ENCODE measurements at regions of chrX and their contacts with region 1.

Region 1: GRCh38 chrX:13401724-13402123 is 81.9 kb upstream of the ATXN3L start:
- DNase-seq: no peak
- ATAC-seq: no peak
- H3K4me3 ChIP-seq: no peak overlapping the region
- H3K4me3 Mint-ChIP-seq: no peak overlapping the region
- H3K27ac ChIP-seq: no peak overlapping the region
- H3K27ac Mint-ChIP-seq: no peak overlapping the region
- H3K4me1 ChIP-seq: no peaks in the 10 kb centered on the region
- H3K4me1 Mint-ChIP-seq: no peaks in the 10 kb centered on the region
- H3K27me3 ChIP-seq: no peaks in the 10 kb centered on the region
- H3K27me3 Mint-ChIP-seq: no peaks in the 10 kb centered on the region
- CTCF ChIP-seq: no peak

Region 2: DNA sequence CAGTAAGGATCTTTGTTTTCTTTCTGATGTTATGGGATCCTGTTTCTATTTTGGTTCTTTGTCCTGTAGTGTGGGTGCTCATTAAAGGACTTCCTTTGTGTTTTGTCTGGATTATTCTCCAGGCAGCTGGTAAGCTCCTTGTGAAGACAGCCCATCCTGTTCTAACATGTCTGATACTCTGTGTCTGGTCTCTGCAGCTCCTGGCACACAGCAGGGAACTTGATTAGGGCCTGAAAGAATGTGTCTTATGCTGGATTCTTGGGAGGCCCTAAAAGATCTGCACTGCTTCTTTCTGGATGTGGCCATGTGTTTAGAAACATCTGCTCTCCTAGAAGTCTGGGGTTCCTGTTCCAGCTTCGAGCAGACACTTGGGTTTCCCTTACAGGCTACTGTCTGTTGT is 43.8 kb before region 1 on chrX:
- CTCF ChIA-PET with region 1: no interaction called
- POLR2A ChIA-PET with region 1: no interaction called
- intact Hi-C with region 1: loop called in 1 of 2 experiments (anchors 10 kb)
- DNase-seq: no peak
- ATAC-seq: no peak
- H3K4me3 ChIP-seq: no peak overlapping the region
- H3K4me3 Mint-ChIP-seq: no peak overlapping the region
- H3K27ac ChIP-seq: no peak overlapping the region
- H3K27ac Mint-ChIP-seq: no peak overlapping the region
- H3K4me1 ChIP-seq: no peaks in the 10 kb centered on the region
- H3K4me1 Mint-ChIP-seq: peaks cover 3% of the 10 kb centered on the region
- H3K27me3 ChIP-seq: no peaks in the 10 kb centered on the region
- H3K27me3 Mint-ChIP-seq: no peaks in the 10 kb centered on the region
- CTCF ChIP-seq: no peak

Region 3: GRCh38 chrX:14963447-14964236 is 1561.9 kb after region 1 on chrX:
- CTCF ChIA-PET with region 1: no interaction called
- POLR2A ChIA-PET with region 1: no interaction called
- intact Hi-C with region 1: no loop called
- DNase-seq: no peak
- ATAC-seq: no peak
- H3K4me3 ChIP-seq: no peak overlapping the region
- H3K4me3 Mint-ChIP-seq: no peak overlapping the region
- H3K27ac ChIP-seq: no peak overlapping the region
- H3K27ac Mint-ChIP-seq: no peak overlapping the region
- H3K4me1 ChIP-seq: no peaks in the 10 kb centered on the region
- H3K4me1 Mint-ChIP-seq: no peaks in the 10 kb centered on the region
- H3K27me3 ChIP-seq: no peaks in the 10 kb centered on the region
- H3K27me3 Mint-ChIP-seq: no peaks in the 10 kb centered on the region
- CTCF ChIP-seq: no peak

Measured in CD8-positive, alpha-beta T cell (primary cell).